ENCODE measurements at regions of chr15 and their contacts with region 1.

Region 1: DNA sequence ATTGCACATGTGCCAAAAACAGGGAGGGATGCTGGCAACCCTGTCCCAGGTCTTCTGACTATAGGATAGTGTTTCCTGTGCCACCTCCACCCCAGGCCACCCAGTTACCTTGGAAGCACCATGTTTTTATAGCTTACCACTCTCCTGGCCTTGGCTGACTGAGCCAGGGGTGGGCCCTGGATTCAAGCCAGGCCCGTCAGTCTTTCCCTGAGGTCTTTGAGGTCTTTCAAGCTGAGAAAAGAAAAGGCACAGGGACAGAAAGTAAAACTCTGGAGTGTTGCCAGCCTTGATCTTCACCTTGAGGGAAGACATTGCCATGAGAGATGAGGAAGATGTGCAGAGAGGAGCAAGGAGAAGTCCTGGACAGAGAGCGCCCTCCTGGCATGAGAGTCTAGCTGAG is 46.3 kb downstream of the SYNM start:
- DNase-seq: no peak
- ATAC-seq: no peak
- H3K4me3 ChIP-seq: no peak overlapping the region
- H3K27ac ChIP-seq: no peak overlapping the region
- H3K4me1 ChIP-seq: peaks cover 12% of the 10 kb centered on the region
- H3K27me3 ChIP-seq: no peaks in the 10 kb centered on the region
- CTCF ChIP-seq: no peak

Region 2: GRCh38 chr15:99163271-99164062 is 12.3 kb after region 1 on chr15:
- intact Hi-C with region 1: loop called in 1 of 2 experiments (anchors 2 kb)
- DNase-seq: no peak
- ATAC-seq: no peak
- H3K4me3 ChIP-seq: no peak overlapping the region
- H3K27ac ChIP-seq: no peak overlapping the region
- H3K4me1 ChIP-seq: peaks cover 25% of the 10 kb centered on the region
- H3K27me3 ChIP-seq: no peaks in the 10 kb centered on the region
- CTCF ChIP-seq: no peak

Measured in psoas muscle (tissue), 8 donors.